Activated CD4-positive, alpha-beta memory T cell treated with anti-CD3 and anti-CD28 coated beads, Interleukin-2, amount 10 ng/mL, durations not matched to agents 7 days and 5 days (primary cell): ENCODE measurements at regions of chr4 and their contacts with region 1.

Region 1: DNA sequence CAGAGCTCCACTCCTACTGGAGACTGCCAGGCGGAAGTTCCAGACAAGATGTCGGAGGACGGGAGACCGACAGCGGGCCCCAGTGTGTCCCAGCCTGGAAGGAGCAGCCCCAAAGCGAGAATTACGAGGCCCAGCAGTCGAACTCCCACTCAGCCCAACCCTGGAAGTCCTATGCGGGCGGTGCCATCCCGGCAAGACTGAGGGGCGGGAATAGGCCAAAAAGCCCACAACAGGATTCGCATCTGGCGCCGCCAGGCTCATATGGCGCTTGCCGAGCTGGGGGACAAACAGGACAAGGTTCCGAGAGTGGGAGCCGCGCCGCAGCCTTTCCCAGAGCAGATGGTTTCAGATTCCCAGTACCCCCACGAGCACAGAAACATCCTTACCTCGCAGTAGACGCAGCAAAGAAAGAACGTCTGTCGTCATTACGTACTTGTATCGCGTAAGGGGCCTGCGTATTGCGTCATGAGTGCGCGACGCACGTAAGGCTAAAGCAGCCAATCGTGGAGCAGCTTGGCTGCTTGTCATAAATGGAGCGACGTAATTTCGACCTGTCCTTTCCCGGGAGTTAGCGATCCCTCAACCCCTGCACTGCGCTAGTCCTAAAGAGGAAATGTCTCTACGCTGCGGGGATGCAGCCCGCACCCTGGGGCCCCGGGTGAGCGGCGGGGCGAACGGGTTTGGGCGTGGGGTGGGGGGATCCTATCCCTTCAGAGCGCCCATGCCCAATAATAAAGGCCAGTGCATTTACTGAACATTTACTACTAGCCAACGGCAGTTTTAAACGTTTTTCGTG is at the starts of genes LIAS and RPL9:
- DNase-seq: peak; percentile 95
- H3K4me3 Mint-ChIP-seq: peak within 1 kb of the TSS; percentile 92
- H3K27ac Mint-ChIP-seq: peak within 1 kb of the TSS; percentile 95
- H3K4me1 Mint-ChIP-seq: peaks cover 46% of the 10 kb centered on the region
- H3K27me3 Mint-ChIP-seq: no peaks in the 10 kb centered on the region
- total RNA-seq, gene LIAS: 13.0 to 14.0 TPM
- total RNA-seq, gene RPL9: 891 to 916 TPM

Region 2: DNA sequence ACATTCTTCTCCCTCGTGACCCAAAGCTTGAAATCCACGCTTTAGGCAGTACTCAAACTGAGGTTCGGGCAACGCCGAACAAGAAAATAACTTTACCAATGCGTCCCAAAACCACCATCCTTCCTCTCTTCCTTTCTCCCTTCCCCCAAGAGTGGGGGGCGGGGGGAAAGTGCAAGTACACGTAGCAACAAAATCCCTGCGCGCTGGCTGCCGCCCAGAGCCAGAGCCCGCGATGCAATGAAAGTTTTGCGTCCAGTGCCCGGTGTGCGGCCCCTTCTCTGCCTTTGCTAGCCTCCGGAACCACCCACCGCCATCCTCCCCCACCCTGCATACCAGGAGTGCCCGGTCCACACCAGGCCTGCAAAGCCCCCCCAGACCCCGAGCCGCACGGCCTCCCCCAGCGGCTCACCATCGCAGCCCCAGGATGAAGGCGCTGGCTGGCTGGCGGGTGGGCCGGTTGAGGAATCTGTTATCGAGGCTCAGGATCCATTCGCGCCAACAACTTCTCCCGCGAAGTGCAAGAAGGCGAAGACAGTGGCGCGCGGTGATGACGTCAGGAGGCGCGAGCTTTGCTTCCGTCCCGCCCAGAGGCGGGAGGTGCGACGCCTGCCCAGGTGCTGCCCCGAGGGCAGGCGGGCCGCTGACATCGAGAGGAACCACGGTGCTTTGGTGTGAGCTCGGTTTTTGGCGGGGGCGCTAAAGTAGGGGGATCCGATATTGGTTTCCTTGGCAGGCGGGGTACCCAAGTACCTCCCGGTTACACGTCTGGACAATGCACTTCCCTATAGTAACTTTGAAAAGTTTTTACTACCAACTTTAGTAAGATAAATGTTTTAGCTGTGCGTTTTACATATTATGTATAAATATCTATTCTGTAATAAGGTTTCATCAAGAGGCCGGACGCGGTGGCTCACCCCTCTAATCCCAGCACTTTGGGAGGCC is 92.6 kb before region 1 on chr4 and contains the start of gene RFC1:
- CTCF ChIA-PET with region 1: no interaction called
- POLR2A ChIA-PET with region 1: interaction called, 73 read pairs
- DNase-seq: peak; percentile 94
- H3K4me3 Mint-ChIP-seq: peak within 1 kb of the TSS; percentile 92
- H3K27ac Mint-ChIP-seq: peak within 1 kb of the TSS; percentile 88
- H3K4me1 Mint-ChIP-seq: peaks cover 41% of the 10 kb centered on the region
- H3K27me3 Mint-ChIP-seq: no peaks in the 10 kb centered on the region
- total RNA-seq, gene RFC1: 72.2 to 72.6 TPM

Region 3: GRCh38 chr4:39426728-39427127 is 32.0 kb before region 1 on chr4:
- CTCF ChIA-PET with region 1: no interaction called
- POLR2A ChIA-PET with region 1: no interaction called
- DNase-seq: no peak
- H3K4me3 Mint-ChIP-seq: no peak overlapping the region
- H3K27ac Mint-ChIP-seq: no peak overlapping the region
- H3K4me1 Mint-ChIP-seq: no peaks in the 10 kb centered on the region
- H3K27me3 Mint-ChIP-seq: peaks cover 1% of the 10 kb centered on the region

Region 4: GRCh38 chr4:39469429-39470077 is 10.8 kb after region 1 on chr4:
- CTCF ChIA-PET with region 1: interaction called, 28 read pairs
- POLR2A ChIA-PET with region 1: interaction called, 24 read pairs
- DNase-seq: no peak
- H3K4me3 Mint-ChIP-seq: no peak overlapping the region
- H3K27ac Mint-ChIP-seq: peak overlapping the region; percentile 38
- H3K4me1 Mint-ChIP-seq: peaks cover 12% of the 10 kb centered on the region
- H3K27me3 Mint-ChIP-seq: no peaks in the 10 kb centered on the region

Region 5: GRCh38 chr4:39565878-39566600 is 107.3 kb after region 1 on chr4:
- CTCF ChIA-PET with region 1: no interaction called
- POLR2A ChIA-PET with region 1: no interaction called
- DNase-seq: no peak
- H3K4me3 Mint-ChIP-seq: no peak overlapping the region
- H3K27ac Mint-ChIP-seq: no peak overlapping the region
- H3K4me1 Mint-ChIP-seq: peaks cover 7% of the 10 kb centered on the region
- H3K27me3 Mint-ChIP-seq: no peaks in the 10 kb centered on the region

Region 6: DNA sequence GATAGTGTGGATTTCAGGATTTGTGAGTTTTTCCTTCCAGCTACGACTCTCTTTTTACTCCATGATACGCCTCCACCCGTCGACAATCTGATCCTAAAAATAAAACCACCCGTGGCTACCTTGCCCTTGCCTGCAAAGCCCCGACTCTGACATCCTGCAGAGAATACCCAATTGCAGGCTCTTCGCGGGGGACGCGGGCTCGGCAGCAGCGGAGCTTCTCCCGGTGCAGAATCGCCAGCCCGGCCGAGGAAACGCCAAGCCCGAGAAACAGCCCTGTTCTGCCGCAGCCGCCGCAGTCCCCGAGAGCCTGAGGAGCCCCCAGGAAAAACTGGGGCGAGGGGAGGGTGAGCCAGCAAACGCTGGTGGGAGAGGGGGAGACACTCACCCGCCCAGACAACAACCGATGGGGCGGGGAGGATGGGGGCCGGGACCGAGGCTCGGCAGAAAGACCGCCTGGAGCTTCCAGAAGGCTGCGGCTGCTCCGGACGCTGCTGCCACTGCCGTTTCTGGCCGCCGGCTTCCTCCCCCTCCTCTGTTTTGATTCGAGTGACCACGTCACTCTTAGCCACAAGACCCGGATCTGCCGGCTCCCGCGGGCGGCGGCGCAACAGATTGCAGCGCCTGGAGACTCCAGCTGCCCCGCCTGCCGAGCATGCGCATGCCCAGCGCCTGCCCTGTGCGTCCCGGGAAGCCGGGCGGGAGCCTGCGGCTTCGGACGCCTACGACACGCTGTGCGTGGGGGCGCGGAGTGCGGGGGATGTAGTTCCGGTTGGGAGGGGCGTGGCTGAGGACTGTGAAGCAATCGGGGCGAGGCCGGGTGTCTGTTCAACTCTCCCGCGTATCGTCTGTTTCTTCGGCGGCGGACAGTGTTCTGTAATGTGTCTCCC is 179.9 kb after region 1 on chr4 and contains the start of gene SMIM14:
- CTCF ChIA-PET with region 1: no interaction called
- POLR2A ChIA-PET with region 1: interaction called, 22 read pairs
- DNase-seq: peak; percentile 90
- H3K4me3 Mint-ChIP-seq: peak within 1 kb of the TSS; percentile 84
- H3K27ac Mint-ChIP-seq: peak within 1 kb of the TSS; percentile 76
- H3K4me1 Mint-ChIP-seq: peaks cover 31% of the 10 kb centered on the region
- H3K27me3 Mint-ChIP-seq: peaks cover 3% of the 10 kb centered on the region
- total RNA-seq, gene SMIM14: 7.2 to 7.6 TPM